H1 (cell line): ENCODE measurements at regions of chr1 and their contacts with region 1.

Region 1: GRCh38 chr1:151156515-151156819 is at the start of gene TNFAIP8L2:
- DNase-seq: no peak
- H3K4me3 ChIP-seq: no peak within 1 kb of the TSS
- H3K27ac ChIP-seq: no peak within 1 kb of the TSS
- H3K4me1 ChIP-seq: no peaks in the 10 kb centered on the region
- H3K27me3 ChIP-seq: no peaks in the 10 kb centered on the region
- CTCF ChIP-seq: no peak
- EP300 ChIP-seq: no peak
- POLR2A ChIP-seq: no peak
- RAD21 ChIP-seq: no peak
- total RNA-seq, gene TNFAIP8L2: not detected in 2 replicates

Region 2: DNA sequence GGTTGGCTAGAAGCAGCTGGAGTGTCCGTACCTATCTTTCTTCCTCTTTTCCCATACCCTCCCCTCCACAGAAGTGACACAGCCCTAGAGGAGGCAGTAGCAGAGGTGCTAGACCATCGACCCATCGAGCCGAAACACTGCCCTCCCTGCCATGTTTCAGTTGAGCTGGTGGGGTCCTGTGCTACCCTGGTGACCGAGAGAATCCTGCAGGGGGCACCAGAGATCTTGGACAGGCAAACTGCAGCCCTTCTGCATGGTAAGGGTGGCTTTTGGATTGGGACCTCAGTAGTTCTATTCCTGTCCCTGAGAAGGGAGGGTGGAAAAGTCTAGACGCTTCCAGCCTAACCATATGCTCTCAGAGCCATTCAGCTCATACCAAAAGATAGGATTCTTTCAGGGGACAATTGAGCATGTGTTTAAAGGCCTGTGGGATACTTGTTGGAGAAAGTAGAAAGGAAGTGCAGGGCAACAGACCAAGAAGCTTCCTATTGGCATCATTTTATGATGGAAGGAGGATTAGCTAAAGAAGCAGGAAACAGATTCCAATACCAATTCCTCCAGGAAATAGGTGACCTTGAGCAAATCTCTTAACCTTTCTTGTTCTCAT is 131.8 kb before region 1 on chr1:
- CTCF ChIA-PET with region 1: interaction called, 33 read pairs
- POLR2A ChIA-PET with region 1: no interaction called
- DNase-seq: peak; percentile 73 to 94
- H3K4me3 ChIP-seq: no peak overlapping the region
- H3K27ac ChIP-seq: no peak overlapping the region
- H3K4me1 ChIP-seq: no peaks in the 10 kb centered on the region
- H3K27me3 ChIP-seq: no peaks in the 10 kb centered on the region
- CTCF ChIP-seq: peak; percentile 87 to 95 (median 94)
- EP300 ChIP-seq: no peak
- POLR2A ChIP-seq: no peak
- RAD21 ChIP-seq: peak; percentile 87 to 93

Region 3: DNA sequence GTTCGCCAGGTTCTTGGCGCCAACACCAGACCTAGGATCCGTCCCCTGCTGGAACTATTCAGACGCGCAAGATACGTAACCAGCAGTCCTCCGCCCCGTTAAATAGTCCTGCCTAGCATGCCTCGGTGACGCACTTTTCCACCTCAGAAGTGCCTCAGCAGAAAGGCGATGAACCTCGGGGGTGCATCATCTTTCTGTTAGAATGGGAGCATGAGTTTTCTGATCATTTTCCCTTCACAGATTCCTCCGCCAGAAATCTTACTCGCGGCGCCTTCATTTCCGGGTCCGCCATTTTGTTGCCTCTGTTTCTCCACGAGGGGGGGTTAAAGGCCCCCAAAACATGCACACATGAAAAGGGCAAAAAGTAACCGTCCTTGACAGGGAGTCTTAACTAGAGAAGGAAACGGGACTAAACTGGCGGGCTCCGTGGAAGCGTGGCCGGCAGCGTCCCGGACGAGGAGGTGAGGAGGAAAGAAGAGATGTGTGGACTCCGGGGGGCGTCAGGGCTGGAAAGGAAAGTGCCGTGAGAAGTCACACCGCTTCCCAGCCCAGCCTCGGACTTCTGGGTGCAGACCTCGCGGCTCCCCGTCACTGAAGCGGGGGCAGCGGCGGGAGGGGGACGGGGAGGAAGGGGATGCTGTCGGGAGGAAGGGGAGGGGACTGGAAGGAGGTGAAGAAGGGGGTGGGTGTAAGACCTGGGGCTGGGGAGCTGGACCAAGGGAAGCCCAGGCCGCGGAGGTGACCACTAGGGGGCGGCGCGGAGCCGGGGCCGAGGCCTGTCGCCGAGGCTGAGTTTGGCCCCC is 85.8 kb before region 1 on chr1 and contains the start of gene GABPB2:
- CTCF ChIA-PET with region 1: interaction called, 18 read pairs
- POLR2A ChIA-PET with region 1: no interaction called
- DNase-seq: peak; percentile 77 to 98
- H3K4me3 ChIP-seq: peak within 1 kb of the TSS; percentile 83 to 94 (median 92)
- H3K27ac ChIP-seq: peak within 1 kb of the TSS; percentile 98
- H3K4me1 ChIP-seq: peaks cover 0 to 4% (median under 1%) of the 10 kb centered on the region in 4 experiments; a peak in 1 of 7 replicates
- H3K27me3 ChIP-seq: no peaks in the 10 kb centered on the region
- CTCF ChIP-seq: peak; percentile 80 to 90 (median 83)
- EP300 ChIP-seq: 0 out of 3 replicates have a peak, but pooled peaks of 1 of the 2 experiments have one; percentile 19
- POLR2A ChIP-seq: peak; percentile 74 to 78; a peak in 1 of 3 replicates
- RAD21 ChIP-seq: peak; percentile 61 to 63
- total RNA-seq, gene GABPB2: 1.9 and 2.4 TPM in 2 replicates

Region 4: GRCh38 chr1:151113877-151114276 is 42.6 kb before region 1 on chr1:
- CTCF ChIA-PET with region 1: interaction called, 10 read pairs
- POLR2A ChIA-PET with region 1: no interaction called
- DNase-seq: no peak
- H3K4me3 ChIP-seq: no peak overlapping the region
- H3K27ac ChIP-seq: no peak overlapping the region
- H3K4me1 ChIP-seq: no peaks in the 10 kb centered on the region
- H3K27me3 ChIP-seq: no peaks in the 10 kb centered on the region
- CTCF ChIP-seq: no peak
- EP300 ChIP-seq: no peak
- POLR2A ChIP-seq: no peak
- RAD21 ChIP-seq: no peak

Region 5: DNA sequence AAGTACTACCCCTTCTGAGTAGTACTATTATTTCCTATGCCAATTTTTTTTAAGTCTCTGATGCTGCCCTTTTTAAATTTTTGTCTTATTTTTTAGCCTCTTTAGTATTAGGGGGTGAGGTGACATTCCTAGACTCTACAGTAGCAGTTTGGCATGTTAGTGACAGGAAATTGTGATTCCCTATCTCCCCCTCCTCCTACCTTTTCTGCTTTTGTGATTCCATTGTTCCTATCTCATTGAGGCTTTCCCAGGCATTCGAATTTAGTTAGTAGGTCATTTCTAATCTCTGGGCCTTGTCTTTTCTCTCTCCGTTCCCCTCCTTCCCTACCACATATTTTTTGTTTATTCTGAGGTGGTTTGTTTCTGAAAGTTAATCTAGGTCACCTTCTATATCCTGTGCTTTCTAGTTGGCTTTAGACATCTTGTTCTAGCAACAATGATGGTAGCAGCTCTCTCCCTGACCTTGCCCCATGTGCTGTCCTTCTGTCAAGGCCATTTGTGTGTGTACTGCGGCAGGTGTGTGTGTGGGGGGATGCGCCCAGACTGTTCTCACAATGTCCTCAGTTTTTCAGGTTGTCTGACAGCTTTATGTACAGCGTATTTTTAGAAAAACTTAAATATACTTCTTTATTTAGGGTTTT is 31.6 kb before region 1 on chr1:
- CTCF ChIA-PET with region 1: interaction called, 14 read pairs
- POLR2A ChIA-PET with region 1: no interaction called
- DNase-seq: no peak
- H3K4me3 ChIP-seq: no peak overlapping the region
- H3K27ac ChIP-seq: no peak overlapping the region
- H3K4me1 ChIP-seq: peaks cover 0 to 6% (median under 1%) of the 10 kb centered on the region in 4 experiments; a peak in 3 of 7 replicates
- H3K27me3 ChIP-seq: no peaks in the 10 kb centered on the region
- CTCF ChIP-seq: no peak
- EP300 ChIP-seq: no peak
- POLR2A ChIP-seq: no peak
- RAD21 ChIP-seq: no peak

Region 6: GRCh38 chr1:151130987-151131586 is 25.4 kb before region 1 on chr1:
- CTCF ChIA-PET with region 1: interaction called, 94 read pairs
- POLR2A ChIA-PET with region 1: interaction called, 4 read pairs
- DNase-seq: peak; percentile 87 to 91
- H3K4me3 ChIP-seq: peak overlapping the region; percentile 37 to 64 (median 45); a peak in 7 of 8 replicates
- H3K27ac ChIP-seq: peak overlapping the region; percentile 42; the same call in 1 of the 2 replicates
- H3K4me1 ChIP-seq: peaks cover 0 to 12% (median 8%) of the 10 kb centered on the region in 4 experiments; a peak in 5 of 7 replicates
- H3K27me3 ChIP-seq: peaks cover 0 to 28% (median 20%) of the 10 kb centered on the region in 4 experiments; a peak in 5 of 7 replicates
- CTCF ChIP-seq: no peak
- EP300 ChIP-seq: no peak
- POLR2A ChIP-seq: peak in 1 of 2 experiments; percentile 67; a peak in 1 of 3 replicates
- RAD21 ChIP-seq: 0 out of 4 replicates have a peak, but pooled peaks of 1 of the 2 experiments have one; percentile 10